ENCODE measurements at regions of chr1 and their contacts with region 1.

Region 1: DNA sequence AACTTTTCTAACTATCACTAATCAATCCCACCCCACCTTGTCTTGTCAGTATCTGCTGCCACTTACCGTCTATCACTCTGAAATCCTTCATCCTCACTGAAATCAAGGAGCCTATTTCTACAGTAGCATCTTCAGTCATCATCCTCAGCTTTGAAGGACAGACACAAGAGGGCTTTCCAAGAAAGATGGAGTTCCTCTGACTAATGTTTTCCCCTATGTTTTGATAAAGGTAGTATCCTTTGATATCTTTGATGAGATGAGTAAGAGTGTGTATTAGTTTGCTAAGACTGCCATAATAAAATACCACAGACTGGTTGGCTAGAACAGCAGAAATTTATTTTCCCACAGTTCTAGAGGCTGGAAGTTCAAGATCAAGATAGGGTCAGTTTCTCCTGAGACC is 101.8 kb upstream of the VAV3 start:
- DNase-seq: no peak
- ATAC-seq: no peak
- H3K4me3 ChIP-seq: no peak overlapping the region
- H3K4me3 Mint-ChIP-seq: no peak overlapping the region
- H3K27ac ChIP-seq: no peak overlapping the region
- H3K27ac Mint-ChIP-seq: no peak overlapping the region
- H3K4me1 ChIP-seq: peaks cover 0 to 6% of the 10 kb centered on the region in 2 experiments
- H3K4me1 Mint-ChIP-seq: peaks cover 5 to 10% (median 8%) of the 10 kb centered on the region in 3 donors
- H3K27me3 ChIP-seq: no peaks in the 10 kb centered on the region
- H3K27me3 Mint-ChIP-seq: no peaks in the 10 kb centered on the region

Region 2: DNA sequence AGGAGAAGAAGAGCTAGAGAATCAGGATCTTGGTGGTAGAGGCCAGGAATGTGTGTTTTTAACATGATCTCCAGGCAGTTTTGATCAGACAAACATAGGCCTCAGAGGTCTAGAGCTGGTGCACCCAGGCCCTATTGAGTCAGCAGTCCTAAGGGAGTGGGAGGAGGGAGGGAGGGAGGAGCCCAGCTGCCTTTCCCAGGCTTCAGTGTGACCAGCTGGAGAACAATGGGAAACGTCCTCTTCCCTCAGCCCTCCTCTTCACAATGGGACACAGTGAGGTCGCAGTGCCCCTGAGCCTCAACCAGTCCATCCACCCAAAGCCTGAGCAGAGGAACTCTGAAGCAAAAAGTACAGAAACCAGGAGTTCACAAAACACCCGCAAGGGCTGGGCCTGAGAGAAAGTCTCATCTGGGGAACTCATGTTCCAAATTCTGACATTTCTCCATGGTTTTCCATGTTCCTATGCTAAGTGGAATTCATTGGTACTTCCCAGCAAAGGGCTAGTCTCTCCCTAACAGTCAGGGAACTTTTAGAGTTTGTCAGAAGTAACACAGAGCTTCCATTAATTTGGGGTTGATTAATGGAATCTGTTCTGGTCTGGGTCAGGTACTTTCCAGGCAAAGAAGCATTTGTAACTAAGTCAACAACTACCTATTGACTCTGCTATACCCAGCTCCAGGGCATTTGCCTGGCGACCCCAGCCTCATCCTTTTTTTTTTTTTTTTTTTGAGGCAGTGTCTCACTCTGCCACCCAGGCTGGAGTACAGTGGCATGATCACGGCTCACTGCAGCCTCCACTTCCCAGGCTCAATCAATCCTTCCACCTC is 1084.6 kb after region 1 on chr1:
- CTCF ChIA-PET with region 1: interaction called in 1 of 2 experiments, 10 read pairs
- POLR2A ChIA-PET with region 1: no interaction called
- DNase-seq: no peak
- ATAC-seq: no peak
- H3K4me3 ChIP-seq: no peak overlapping the region
- H3K4me3 Mint-ChIP-seq: no peak overlapping the region
- H3K27ac ChIP-seq: no peak overlapping the region
- H3K27ac Mint-ChIP-seq: no peak overlapping the region
- H3K4me1 ChIP-seq: no peaks in the 10 kb centered on the region
- H3K4me1 Mint-ChIP-seq: no peaks in the 10 kb centered on the region
- H3K27me3 ChIP-seq: no peaks in the 10 kb centered on the region
- H3K27me3 Mint-ChIP-seq: no peaks in the 10 kb centered on the region

Measured in T-cell (primary cell).